ENCODE measurements at regions of chr4 and their contacts with region 1.

Region 1: DNA sequence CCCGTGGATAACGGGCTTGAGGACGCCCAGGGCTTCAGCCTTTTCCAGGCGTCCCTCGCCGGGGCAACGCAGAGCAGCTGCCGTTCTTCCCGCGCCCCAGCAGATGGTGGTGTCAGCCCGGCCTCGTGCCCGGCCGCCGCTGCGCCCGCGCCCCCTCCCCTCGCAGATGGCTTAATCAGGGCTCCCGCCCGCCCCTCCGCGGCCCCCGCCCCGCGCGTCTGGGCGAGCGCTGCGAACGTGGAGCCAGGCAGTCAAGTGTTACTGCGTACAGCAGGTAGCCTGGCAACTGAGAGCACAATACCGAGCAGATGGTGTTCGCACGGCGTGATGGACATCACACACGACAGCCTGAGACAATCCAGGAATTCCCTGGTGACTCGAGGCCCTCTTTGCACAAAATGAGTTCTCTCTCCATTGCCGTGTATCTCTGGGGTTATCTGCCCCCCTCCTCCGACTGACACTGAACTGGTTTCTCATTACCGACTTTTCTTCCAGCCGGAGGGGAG is 69.3 kb downstream of the MGST2 start:
- DNase-seq: peak; percentile 94
- H3K4me3 ChIP-seq: peak overlapping the region in 2 of 3 experiments; percentile 18 to 34
- H3K27ac ChIP-seq: peak overlapping the region; percentile 14
- H3K4me1 ChIP-seq: peaks cover 12% of the 10 kb centered on the region
- H3K27me3 ChIP-seq: no peaks in the 10 kb centered on the region
- CTCF ChIP-seq: peak; percentile 66 to 88
- POLR2A ChIP-seq: no peak

Region 2: DNA sequence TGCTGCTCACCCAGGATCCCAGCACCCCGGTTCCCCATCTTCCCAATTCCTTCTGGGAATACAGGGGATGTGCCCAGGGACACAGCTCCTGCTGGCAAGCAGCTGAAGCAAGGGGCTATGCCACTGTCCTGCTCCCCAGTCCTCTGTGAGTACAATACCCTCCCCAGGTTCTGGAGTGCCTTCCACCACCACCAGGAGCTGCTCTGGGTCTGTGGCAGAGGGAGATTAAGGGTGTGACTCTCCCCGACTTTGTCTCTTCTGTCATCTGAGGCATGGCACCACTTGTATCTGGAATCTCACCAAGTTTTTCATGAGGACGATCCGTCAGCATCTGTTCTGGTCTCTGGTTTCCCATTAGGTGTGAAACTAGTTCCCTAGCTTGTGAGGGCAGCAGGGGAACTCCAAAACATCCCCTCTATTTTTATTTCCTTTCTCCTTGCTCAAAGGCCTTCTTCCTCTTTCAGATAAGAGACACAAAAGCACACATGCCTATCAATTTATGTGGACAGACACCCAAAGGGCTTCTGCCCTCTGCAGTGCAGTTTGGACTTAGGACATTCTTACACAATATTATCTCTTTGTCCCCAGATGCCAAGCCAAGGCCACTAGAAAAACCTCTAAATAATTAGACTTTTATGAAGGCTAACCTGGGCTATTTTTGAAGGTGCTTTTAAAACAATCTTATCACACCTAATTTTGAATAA is 42.5 kb before region 1 on chr4:
- CTCF ChIA-PET with region 1: no interaction called
- POLR2A ChIA-PET with region 1: no interaction called
- dilution Hi-C with region 1: no loop called
- intact Hi-C with region 1: no loop called
- DNase-seq: peak; percentile 12
- H3K4me3 ChIP-seq: no peak overlapping the region
- H3K27ac ChIP-seq: no peak overlapping the region
- H3K4me1 ChIP-seq: no peaks in the 10 kb centered on the region
- H3K27me3 ChIP-seq: no peaks in the 10 kb centered on the region
- CTCF ChIP-seq: peak in 1 of 2 donors; percentile 21
- POLR2A ChIP-seq: no peak

Region 3: GRCh38 chr4:139815778-139816601 is 81.1 kb after region 1 on chr4:
- CTCF ChIA-PET with region 1: interaction called, 8 read pairs
- POLR2A ChIA-PET with region 1: no interaction called
- dilution Hi-C with region 1: no loop called
- intact Hi-C with region 1: loop called (anchors 2 kb)
- DNase-seq: peak; percentile 94
- H3K4me3 ChIP-seq: peak overlapping the region in 2 of 3 experiments; percentile 31 to 53
- H3K27ac ChIP-seq: peak overlapping the region; percentile 61
- H3K4me1 ChIP-seq: peaks cover 22% of the 10 kb centered on the region
- H3K27me3 ChIP-seq: no peaks in the 10 kb centered on the region
- CTCF ChIP-seq: no peak
- POLR2A ChIP-seq: no peak

Region 4: DNA sequence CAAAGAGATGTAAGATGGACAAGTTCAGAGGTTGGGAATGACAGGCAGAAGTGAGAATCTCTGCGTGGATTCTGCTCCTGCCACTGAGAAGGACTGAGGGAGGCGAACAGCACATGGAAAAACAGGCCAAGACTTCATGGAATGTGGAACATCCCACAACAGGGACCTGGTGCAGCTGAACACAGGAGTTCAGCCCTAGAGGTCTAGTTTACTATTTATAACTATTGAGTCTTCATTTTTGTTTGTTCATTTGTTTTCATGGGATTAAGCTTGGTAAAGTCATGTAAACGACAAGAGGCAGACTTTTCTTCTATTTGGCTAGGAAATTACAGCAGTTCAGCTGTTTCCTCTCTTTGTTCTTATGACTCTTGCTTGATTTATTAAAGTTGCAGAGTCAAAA is 184.6 kb after region 1 on chr4:
- CTCF ChIA-PET with region 1: interaction called, 4 read pairs
- POLR2A ChIA-PET with region 1: no interaction called
- dilution Hi-C with region 1: no loop called
- intact Hi-C with region 1: loop called (anchors 1 kb)
- DNase-seq: peak; percentile 95
- H3K4me3 ChIP-seq: no peak overlapping the region
- H3K27ac ChIP-seq: peak overlapping the region; percentile 84
- H3K4me1 ChIP-seq: peaks cover 47% of the 10 kb centered on the region
- H3K27me3 ChIP-seq: no peaks in the 10 kb centered on the region
- CTCF ChIP-seq: no peak
- POLR2A ChIP-seq: peak; percentile 21

Region 5: GRCh38 chr4:140004549-140004895 is 269.6 kb after region 1 on chr4:
- CTCF ChIA-PET with region 1: interaction called, 9 read pairs
- POLR2A ChIA-PET with region 1: no interaction called
- dilution Hi-C with region 1: no loop called
- intact Hi-C with region 1: loop called (anchors 2 kb)
- DNase-seq: peak; percentile 74
- H3K4me3 ChIP-seq: peak overlapping the region in 2 of 3 experiments; percentile 7 to 34
- H3K27ac ChIP-seq: no peak overlapping the region
- H3K4me1 ChIP-seq: peaks cover 7% of the 10 kb centered on the region
- H3K27me3 ChIP-seq: no peaks in the 10 kb centered on the region
- CTCF ChIP-seq: no peak
- POLR2A ChIP-seq: no peak

Region 6: DNA sequence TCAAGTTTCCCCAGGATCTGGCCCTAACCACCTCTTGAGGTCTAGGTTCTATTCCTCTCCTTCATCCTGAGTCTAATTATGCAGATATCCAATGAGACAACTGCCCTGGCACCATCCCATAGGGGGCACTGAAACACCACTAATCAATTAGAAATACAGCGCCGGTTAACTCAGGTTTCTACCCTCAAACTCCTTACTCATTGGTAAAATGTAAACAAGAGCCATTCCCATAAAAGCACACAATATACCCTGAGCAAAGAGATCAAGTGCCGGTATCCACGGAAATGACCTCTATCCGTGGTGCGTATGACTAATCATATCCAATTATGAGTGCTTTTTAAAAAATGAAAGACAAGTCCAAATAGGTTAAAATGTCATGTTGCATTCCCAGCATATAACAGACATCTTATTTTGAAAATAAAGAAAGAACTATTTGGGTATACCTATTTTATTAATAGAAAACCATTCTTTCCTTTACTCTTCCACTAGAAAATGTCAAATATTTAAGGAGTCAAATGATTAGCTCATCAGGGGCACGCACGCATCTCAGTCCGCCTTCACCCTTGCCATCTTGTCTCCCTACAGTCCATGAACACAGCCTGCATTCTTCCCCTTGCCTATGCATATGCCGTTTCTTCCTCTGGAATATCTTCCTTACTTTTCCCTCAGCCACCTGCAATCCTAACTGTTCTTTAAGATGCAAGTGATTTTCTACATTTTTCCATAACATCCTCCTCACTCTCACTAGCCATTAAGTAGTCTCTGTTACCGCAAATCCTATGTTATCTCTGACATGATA is 278.0 kb after region 1 on chr4:
- CTCF ChIA-PET with region 1: interaction called, 37 read pairs
- POLR2A ChIA-PET with region 1: no interaction called
- dilution Hi-C with region 1: no loop called
- intact Hi-C with region 1: loop called (anchors 1 kb)
- DNase-seq: peak; percentile 92
- H3K4me3 ChIP-seq: no peak overlapping the region
- H3K27ac ChIP-seq: peak overlapping the region; percentile 49
- H3K4me1 ChIP-seq: peaks cover 17% of the 10 kb centered on the region
- H3K27me3 ChIP-seq: no peaks in the 10 kb centered on the region
- CTCF ChIP-seq: peak; percentile 62 to 74
- POLR2A ChIP-seq: no peak

Region 7: GRCh38 chr4:140095694-140096482 is 361.0 kb after region 1 on chr4:
- CTCF ChIA-PET with region 1: interaction called, 3 read pairs
- POLR2A ChIA-PET with region 1: no interaction called
- dilution Hi-C with region 1: no loop called
- intact Hi-C with region 1: loop called (anchors 1 kb)
- DNase-seq: peak; percentile 95
- H3K4me3 ChIP-seq: peak overlapping the region in 1 of 3 experiments; percentile 57
- H3K27ac ChIP-seq: peak overlapping the region; percentile 100
- H3K4me1 ChIP-seq: peaks cover 97% of the 10 kb centered on the region
- H3K27me3 ChIP-seq: no peaks in the 10 kb centered on the region
- CTCF ChIP-seq: no peak
- POLR2A ChIP-seq: peak; percentile 53

Region 8: DNA sequence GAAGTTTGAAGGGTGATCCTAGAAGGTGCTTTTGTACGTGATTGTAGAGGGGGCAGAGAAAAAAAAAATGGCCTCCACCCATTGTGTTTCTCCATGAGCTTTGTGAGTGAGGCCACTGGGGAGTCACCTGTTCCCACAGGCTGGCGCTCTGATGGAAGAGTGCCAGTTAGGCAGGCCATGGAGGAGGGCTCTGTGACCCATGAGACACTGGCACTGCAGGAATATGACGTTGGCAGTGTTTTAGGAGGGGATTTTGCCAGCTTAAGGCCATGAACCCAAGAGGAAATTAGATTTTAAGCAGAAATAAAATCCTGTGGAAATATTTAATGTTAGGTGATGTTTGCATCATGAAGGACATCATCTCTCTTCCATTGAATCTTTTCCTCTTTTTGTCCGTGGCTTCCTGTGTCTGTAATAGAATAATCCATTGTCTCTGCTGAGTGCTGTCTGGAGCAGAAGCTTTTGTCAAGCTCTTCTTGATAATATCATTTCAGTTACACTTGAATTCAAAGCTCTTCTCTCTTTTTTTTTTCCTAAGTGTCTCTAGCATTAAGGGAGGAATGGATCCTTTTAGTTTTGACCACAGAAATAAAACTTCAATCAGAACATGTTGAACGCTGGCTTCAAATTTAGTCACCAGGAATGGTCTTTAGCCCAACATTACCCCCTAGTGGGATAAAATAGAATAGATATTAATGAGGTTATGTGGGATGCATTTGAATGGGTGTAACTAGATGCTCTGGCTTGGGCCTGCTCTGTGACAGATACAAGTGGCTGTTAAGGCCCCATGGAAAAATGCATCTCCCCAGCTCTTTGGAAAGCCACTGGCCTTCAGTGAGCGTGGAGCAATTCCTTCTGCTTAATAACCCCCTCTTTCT is 874.9 kb after region 1 on chr4:
- CTCF ChIA-PET with region 1: interaction called, 6 read pairs
- POLR2A ChIA-PET with region 1: no interaction called
- dilution Hi-C with region 1: no loop called
- intact Hi-C with region 1: loop called (anchors 10 kb)
- DNase-seq: peak; percentile 75
- H3K4me3 ChIP-seq: no peak overlapping the region
- H3K27ac ChIP-seq: no peak overlapping the region
- H3K4me1 ChIP-seq: peaks cover 3% of the 10 kb centered on the region
- H3K27me3 ChIP-seq: peaks cover 0 to 11% of the 10 kb centered on the region in 2 experiments
- CTCF ChIP-seq: peak; percentile 20 to 36
- POLR2A ChIP-seq: no peak